CD4-positive, alpha-beta T cell (primary cell): ENCODE measurements at regions of chr17 and their contacts with region 1.

Region 1: GRCh38 chr17:80297996-80298560 is 37.4 kb downstream of the RNF213 start:
- DNase-seq: no peak
- ATAC-seq: no peak
- H3K4me3 ChIP-seq: no peak overlapping the region
- H3K4me3 Mint-ChIP-seq: no peak overlapping the region
- H3K27ac ChIP-seq: no peak overlapping the region
- H3K27ac Mint-ChIP-seq: peak overlapping the region; percentile 20
- H3K4me1 ChIP-seq: no peaks in the 10 kb centered on the region
- H3K4me1 Mint-ChIP-seq: no peaks in the 10 kb centered on the region
- H3K27me3 ChIP-seq: no peaks in the 10 kb centered on the region
- H3K27me3 Mint-ChIP-seq: no peaks in the 10 kb centered on the region
- CTCF ChIP-seq: no peak

Region 2: DNA sequence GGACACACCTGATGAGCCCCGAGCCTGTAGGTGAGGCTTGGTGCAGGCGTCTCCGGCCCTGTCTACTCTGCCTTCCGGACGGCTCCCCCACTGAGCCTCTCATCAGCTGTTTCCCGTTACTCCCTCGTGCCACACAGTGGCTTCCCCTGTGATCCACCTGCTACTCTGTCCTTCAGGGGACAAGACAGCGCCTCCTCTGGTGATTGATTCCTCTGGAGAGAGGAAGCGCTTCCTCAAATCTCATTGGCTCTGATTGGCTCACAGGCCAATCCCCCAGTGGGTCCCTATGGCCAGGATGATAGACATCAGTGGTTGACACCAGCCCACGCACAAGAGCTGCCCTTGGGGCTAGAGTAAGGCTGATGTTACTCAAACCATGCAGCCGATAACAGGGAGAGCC is 13.4 kb before region 1 on chr17:
- CTCF ChIA-PET with region 1: no interaction called
- POLR2A ChIA-PET with region 1: no interaction called
- intact Hi-C with region 1: no loop called
- DNase-seq: peak in 1 of 14 experiments; percentile 23
- ATAC-seq: no peak
- H3K4me3 ChIP-seq: no peak overlapping the region
- H3K4me3 Mint-ChIP-seq: no peak overlapping the region
- H3K27ac ChIP-seq: no peak overlapping the region
- H3K27ac Mint-ChIP-seq: peak overlapping the region; percentile 54
- H3K4me1 ChIP-seq: peaks cover 11% of the 10 kb centered on the region
- H3K4me1 Mint-ChIP-seq: peaks cover 6% of the 10 kb centered on the region
- H3K27me3 ChIP-seq: no peaks in the 10 kb centered on the region
- H3K27me3 Mint-ChIP-seq: no peaks in the 10 kb centered on the region
- CTCF ChIP-seq: no peak

Region 3: GRCh38 chr17:80374732-80375585 is 76.9 kb after region 1 on chr17:
- CTCF ChIA-PET with region 1: no interaction called
- POLR2A ChIA-PET with region 1: no interaction called
- intact Hi-C with region 1: loop called in 1 of 2 experiments (anchors 5 kb)
- DNase-seq: peak in 1 of 14 experiments; percentile 3
- ATAC-seq: no peak
- H3K4me3 ChIP-seq: no peak overlapping the region
- H3K4me3 Mint-ChIP-seq: no peak overlapping the region
- H3K27ac ChIP-seq: no peak overlapping the region
- H3K27ac Mint-ChIP-seq: no peak overlapping the region
- H3K4me1 ChIP-seq: no peaks in the 10 kb centered on the region
- H3K4me1 Mint-ChIP-seq: no peaks in the 10 kb centered on the region
- H3K27me3 ChIP-seq: no peaks in the 10 kb centered on the region
- H3K27me3 Mint-ChIP-seq: no peaks in the 10 kb centered on the region
- CTCF ChIP-seq: no peak